Keratinocyte (primary cell): ENCODE measurements at regions of chr5 and their contacts with region 1.

Region 1: DNA sequence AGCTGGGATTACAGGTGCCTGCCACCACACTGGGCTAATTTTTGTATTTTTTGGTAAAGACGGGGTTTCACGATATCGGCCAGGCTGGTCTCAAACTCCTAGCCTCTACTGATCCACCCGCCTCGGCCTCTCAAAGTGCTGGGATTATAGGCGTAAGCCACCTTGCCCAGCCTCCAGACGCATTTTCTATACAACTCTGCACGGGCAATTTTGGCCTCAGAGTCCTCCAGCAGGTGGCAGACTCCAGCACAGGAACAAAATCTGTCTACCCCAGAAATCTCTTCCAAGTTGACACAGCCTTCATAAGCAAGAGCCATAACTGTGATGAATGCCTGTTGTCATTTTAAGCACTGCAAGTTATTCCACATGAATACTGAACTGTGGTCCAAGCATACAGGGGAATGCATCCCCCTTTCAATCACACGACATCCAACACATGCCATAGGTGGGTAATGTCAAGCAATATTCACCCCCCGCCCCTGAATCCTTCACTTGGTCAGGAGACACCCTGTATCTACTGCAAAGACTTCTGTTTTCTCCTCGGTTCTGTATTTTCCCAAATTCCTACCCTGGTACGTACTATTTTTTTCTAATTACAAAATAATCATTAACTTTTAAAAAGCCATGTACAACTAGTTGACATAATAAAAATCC is 50.8 kb downstream of the ALDH7A1 start:
- DNase-seq: no peak
- H3K4me3 ChIP-seq: no peak overlapping the region
- H3K27ac ChIP-seq: no peak overlapping the region
- H3K4me1 ChIP-seq: no peaks in the 10 kb centered on the region
- H3K27me3 ChIP-seq: no peaks in the 10 kb centered on the region
- CTCF ChIP-seq: peak; percentile 48 to 66 (median 62)

Region 2: DNA sequence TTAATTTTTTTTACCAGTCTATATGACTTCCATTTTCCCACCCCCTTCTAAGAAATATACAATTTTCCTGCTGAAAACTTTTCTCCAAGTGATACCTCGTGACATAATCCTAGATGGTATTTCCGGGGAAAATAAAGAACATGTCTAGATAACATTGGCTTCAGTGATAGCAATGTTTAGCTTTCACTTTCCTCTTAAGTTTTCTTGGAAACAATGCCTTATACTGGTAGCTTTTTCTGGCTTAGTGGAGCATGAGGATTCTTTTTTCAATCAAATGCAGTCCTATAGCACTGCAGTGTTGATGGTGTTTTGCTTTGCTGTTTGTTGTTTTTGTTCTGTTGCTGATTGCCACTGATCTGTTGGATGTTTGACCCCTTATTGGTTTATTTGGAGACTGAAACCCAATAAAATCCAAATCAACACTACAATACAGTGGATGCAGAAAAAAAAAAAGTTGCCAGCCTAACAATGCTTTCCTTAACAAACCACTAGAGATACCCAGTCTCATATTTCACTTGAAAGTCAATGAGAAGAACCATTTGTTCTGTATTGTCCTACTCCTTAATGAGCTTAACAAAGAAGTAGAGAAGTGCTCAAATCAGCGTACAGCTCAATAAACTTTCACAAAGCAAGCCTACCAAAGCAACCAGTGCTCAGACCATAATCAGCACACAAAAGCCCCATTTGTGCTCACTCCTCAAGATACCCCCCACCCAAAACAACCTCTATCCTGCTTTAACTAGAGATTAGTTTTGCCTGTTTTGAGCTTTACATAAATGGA is 195.2 kb before region 1 on chr5:
- dilution Hi-C with region 1: loop called (anchors 10 kb)
- DNase-seq: no peak
- H3K4me3 ChIP-seq: no peak overlapping the region
- H3K27ac ChIP-seq: no peak overlapping the region
- H3K4me1 ChIP-seq: peaks cover 17% of the 10 kb centered on the region
- H3K27me3 ChIP-seq: no peaks in the 10 kb centered on the region
- CTCF ChIP-seq: no peak